ENCODE measurements at regions of chr12 and their contacts with region 1.

Region 1: DNA sequence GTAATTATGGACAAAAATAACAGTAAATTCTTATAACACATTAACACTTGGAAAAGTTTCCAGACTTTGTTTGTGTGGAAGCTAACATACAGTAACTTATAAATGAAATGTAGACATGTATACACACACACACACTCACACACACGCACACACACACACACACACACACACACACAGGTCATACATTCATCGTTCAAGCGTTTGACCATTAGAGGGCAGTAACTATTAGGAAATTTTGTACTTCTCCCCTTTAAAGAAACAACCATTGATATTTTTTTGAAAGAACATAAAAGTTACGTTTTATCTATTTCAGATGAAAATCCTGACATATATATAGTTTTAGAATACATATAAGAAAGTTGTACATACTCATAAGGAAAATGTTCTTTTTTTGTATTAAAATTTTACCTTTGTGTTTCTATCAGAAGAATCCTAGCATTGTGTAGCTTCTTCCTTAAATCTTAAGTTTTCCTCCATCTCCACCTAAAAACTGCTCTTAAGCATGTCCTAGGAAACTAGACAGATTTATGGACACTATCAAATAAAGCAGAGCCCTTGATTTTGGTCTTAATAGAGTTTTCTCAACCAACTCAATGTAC is 29.0 kb downstream of the PTPRQ start:
- DNase-seq: peak; percentile 2
- ATAC-seq: no peak
- H3K4me3 ChIP-seq: no peak overlapping the region
- H3K27ac ChIP-seq: no peak overlapping the region
- H3K4me1 ChIP-seq: no peaks in the 10 kb centered on the region
- H3K27me3 ChIP-seq: no peaks in the 10 kb centered on the region
- CTCF ChIP-seq: peak; percentile 52; the same call in 1 of the 2 replicates

Region 2: GRCh38 chr12:80598004-80598606 is 125.1 kb after region 1 on chr12:
- CTCF ChIA-PET with region 1: no interaction called
- POLR2A ChIA-PET with region 1: no interaction called
- in situ Hi-C with region 1: no loop called
- intact Hi-C with region 1: loop called (anchors 10 kb)
- DNase-seq: peak; percentile 2
- ATAC-seq: no peak
- H3K4me3 ChIP-seq: no peak overlapping the region
- H3K27ac ChIP-seq: no peak overlapping the region
- H3K4me1 ChIP-seq: no peaks in the 10 kb centered on the region
- H3K27me3 ChIP-seq: no peaks in the 10 kb centered on the region
- CTCF ChIP-seq: peak; percentile 39; the same call in 1 of the 2 replicates

Region 3: GRCh38 chr12:80763874-80764273 is 290.9 kb after region 1 on chr12:
- CTCF ChIA-PET with region 1: no interaction called
- POLR2A ChIA-PET with region 1: no interaction called
- in situ Hi-C with region 1: no loop called
- intact Hi-C with region 1: loop called (anchors 5 kb)
- DNase-seq: peak; percentile 5
- ATAC-seq: no peak
- H3K4me3 ChIP-seq: no peak overlapping the region
- H3K27ac ChIP-seq: no peak overlapping the region
- H3K4me1 ChIP-seq: no peaks in the 10 kb centered on the region
- H3K27me3 ChIP-seq: no peaks in the 10 kb centered on the region
- CTCF ChIP-seq: peak; percentile 58; the same call in 1 of the 2 replicates

Region 4: GRCh38 chr12:81257947-81258551 is 785.0 kb after region 1 on chr12:
- CTCF ChIA-PET with region 1: no interaction called
- POLR2A ChIA-PET with region 1: no interaction called
- in situ Hi-C with region 1: no loop called
- intact Hi-C with region 1: loop called (anchors 10 kb)
- DNase-seq: no peak
- ATAC-seq: no peak
- H3K4me3 ChIP-seq: no peak overlapping the region
- H3K27ac ChIP-seq: no peak overlapping the region
- H3K4me1 ChIP-seq: no peaks in the 10 kb centered on the region
- H3K27me3 ChIP-seq: no peaks in the 10 kb centered on the region
- CTCF ChIP-seq: peak; percentile 52; the same call in 1 of the 2 replicates